CD8-positive, alpha-beta memory T cell (primary cell): ENCODE measurements at regions of chr20 and their contacts with region 1.

Region 1: DNA sequence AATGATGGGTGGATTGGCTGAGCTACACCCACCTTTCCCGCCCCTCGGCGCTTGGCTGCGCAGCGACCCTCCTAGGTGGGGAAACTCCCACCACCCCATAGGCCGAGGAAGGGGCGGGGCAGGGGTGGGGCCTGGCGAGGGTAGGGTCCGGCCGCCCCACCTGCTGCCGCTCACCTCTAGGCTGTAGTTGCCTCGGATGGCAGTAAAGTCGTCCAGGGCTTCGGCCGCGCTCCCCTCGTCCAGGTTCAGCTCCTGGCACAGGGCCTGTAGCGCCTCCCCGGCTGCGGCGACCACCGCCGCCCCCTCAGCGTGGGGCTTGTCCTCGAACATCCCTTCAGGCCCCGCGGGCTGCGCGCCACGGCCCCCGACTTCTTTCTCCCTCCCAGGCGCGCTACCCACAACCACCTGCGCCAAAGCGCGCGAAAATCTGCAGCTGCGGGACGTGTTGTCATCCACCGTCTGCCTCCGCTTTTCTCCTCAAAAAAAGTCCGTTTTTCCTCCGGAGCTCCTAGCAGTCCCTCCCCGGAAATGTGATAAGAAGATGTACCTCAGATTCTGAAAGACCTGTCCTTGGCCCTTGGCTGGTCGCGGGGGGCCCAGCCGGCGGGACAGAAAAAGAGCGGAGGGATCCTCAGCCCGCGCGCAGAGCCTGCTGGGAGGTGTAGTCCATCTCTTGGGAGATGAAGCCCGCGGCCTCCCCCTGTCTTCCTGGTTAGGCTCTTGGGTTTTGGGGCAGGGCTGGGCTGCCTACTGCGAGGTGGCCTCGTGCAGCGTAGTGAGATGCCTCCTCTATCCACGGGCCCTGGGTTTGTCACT is at the start of gene RBL1:
- DNase-seq: peak; percentile 77 to 91 (median 88)
- H3K4me3 ChIP-seq: peak within 1 kb of the TSS; percentile 72
- H3K4me3 Mint-ChIP-seq: peak within 1 kb of the TSS; percentile 97 to 100 (median 98)
- H3K27ac ChIP-seq: peak within 1 kb of the TSS; percentile 76
- H3K27ac Mint-ChIP-seq: peak within 1 kb of the TSS; percentile 98 to 99 (median 99)
- H3K4me1 ChIP-seq: peaks cover 20% of the 10 kb centered on the region
- H3K4me1 Mint-ChIP-seq: peaks cover 29 to 46% (median 46%) of the 10 kb centered on the region in 3 donors
- H3K27me3 ChIP-seq: no peaks in the 10 kb centered on the region
- H3K27me3 Mint-ChIP-seq: peaks cover 0 to 5% of the 10 kb centered on the region in 2 donors
- total RNA-seq, gene RBL1: 44.0 to 45.0 TPM

Region 2: GRCh38 chr20:37081717-37082289 is 14.0 kb before region 1 on chr20:
- CTCF ChIA-PET with region 1: interaction called, 18 read pairs
- POLR2A ChIA-PET with region 1: interaction called, 4 read pairs
- DNase-seq: peak in 4 of 5 donors; percentile 22 to 51 (median 34)
- H3K4me3 ChIP-seq: no peak overlapping the region
- H3K4me3 Mint-ChIP-seq: no peak overlapping the region
- H3K27ac ChIP-seq: no peak overlapping the region
- H3K27ac Mint-ChIP-seq: peak overlapping the region; percentile 32 to 84 (median 66)
- H3K4me1 ChIP-seq: peaks cover 12% of the 10 kb centered on the region
- H3K4me1 Mint-ChIP-seq: peaks cover 24 to 46% (median 35%) of the 10 kb centered on the region in 3 donors
- H3K27me3 ChIP-seq: no peaks in the 10 kb centered on the region
- H3K27me3 Mint-ChIP-seq: no peaks in the 10 kb centered on the region

Region 3: GRCh38 chr20:37192137-37192854 is 96.5 kb after region 1 on chr20:
- CTCF ChIA-PET with region 1: no interaction called
- POLR2A ChIA-PET with region 1: no interaction called
- DNase-seq: peak; percentile 49 to 64 (median 55)
- H3K4me3 ChIP-seq: no peak overlapping the region
- H3K4me3 Mint-ChIP-seq: peak overlapping the region in 1 of 7 donors; percentile 10
- H3K27ac ChIP-seq: no peak overlapping the region
- H3K27ac Mint-ChIP-seq: peak overlapping the region; percentile 2 to 75 (median 34)
- H3K4me1 ChIP-seq: peaks cover 56% of the 10 kb centered on the region
- H3K4me1 Mint-ChIP-seq: peaks cover 68 to 83% (median 83%) of the 10 kb centered on the region in 3 donors
- H3K27me3 ChIP-seq: no peaks in the 10 kb centered on the region
- H3K27me3 Mint-ChIP-seq: no peaks in the 10 kb centered on the region

Region 4: GRCh38 chr20:37520164-37520955 is 424.6 kb after region 1 on chr20:
- CTCF ChIA-PET with region 1: no interaction called
- POLR2A ChIA-PET with region 1: interaction called, 10 read pairs
- DNase-seq: no peak
- H3K4me3 ChIP-seq: no peak overlapping the region
- H3K4me3 Mint-ChIP-seq: peak overlapping the region in 6 of 7 donors; percentile 41 to 67 (median 54)
- H3K27ac ChIP-seq: no peak overlapping the region
- H3K27ac Mint-ChIP-seq: no peak overlapping the region
- H3K4me1 ChIP-seq: peaks cover 17% of the 10 kb centered on the region
- H3K4me1 Mint-ChIP-seq: peaks cover 47 to 84% (median 52%) of the 10 kb centered on the region in 3 donors
- H3K27me3 ChIP-seq: no peaks in the 10 kb centered on the region
- H3K27me3 Mint-ChIP-seq: peaks cover 0 to 3% of the 10 kb centered on the region in 2 donors